ENCODE measurements at regions of chr10 and their contacts with region 1.

Region 1: DNA sequence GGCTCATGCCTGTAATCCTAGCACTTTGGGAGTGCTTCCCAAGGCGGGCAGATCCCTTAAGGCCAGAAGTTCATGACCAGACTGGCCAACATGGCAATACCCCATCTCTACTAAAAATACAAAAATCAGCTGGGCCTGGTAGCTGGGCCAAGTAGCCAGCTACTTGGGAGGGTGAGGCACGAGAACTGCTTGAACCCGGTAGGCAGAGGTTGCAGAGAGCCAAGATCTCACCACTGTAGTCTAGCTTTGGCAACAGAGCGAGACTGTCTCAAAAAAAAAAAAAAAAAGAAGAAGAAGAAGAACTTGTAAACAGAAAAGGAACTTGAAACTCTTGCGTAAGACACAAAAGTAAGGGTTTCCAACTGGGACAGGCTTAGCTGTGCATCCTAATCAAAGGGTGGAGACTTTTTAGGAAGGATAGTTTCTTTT is 5.6 kb upstream of the IFIT2 start:
- DNase-seq: no peak
- ATAC-seq: no peak
- H3K4me3 ChIP-seq: no peak overlapping the region
- H3K27ac ChIP-seq: no peak overlapping the region
- H3K4me1 ChIP-seq: no peaks in the 10 kb centered on the region
- H3K27me3 ChIP-seq: no peaks in the 10 kb centered on the region
- CTCF ChIP-seq: no peak
- EP300 ChIP-seq: no peak
- POLR2A ChIP-seq: no peak
- RAD21 ChIP-seq: no peak

Region 2: GRCh38 chr10:89251409-89252224 is 44.6 kb before region 1 on chr10 and contains the start of gene LIPA:
- CTCF ChIA-PET with region 1: no interaction called
- POLR2A ChIA-PET with region 1: no interaction called
- in situ Hi-C with region 1: no loop called
- intact Hi-C with region 1: no loop called
- DNase-seq: peak in 1 of 4 experiments; percentile 1
- ATAC-seq: no peak
- H3K4me3 ChIP-seq: no peak within 1 kb of the TSS
- H3K27ac ChIP-seq: no peak within 1 kb of the TSS
- H3K4me1 ChIP-seq: peaks cover 0 to 6% of the 10 kb centered on the region in 2 experiments; a peak in 2 of 5 replicates
- H3K27me3 ChIP-seq: no peaks in the 10 kb centered on the region
- CTCF ChIP-seq: no peak
- EP300 ChIP-seq: no peak
- POLR2A ChIP-seq: no peak
- RAD21 ChIP-seq: no peak
- polyA plus RNA-seq, gene LIPA: 0.13 to 0.20 TPM

Region 3: GRCh38 chr10:89389254-89389653 is 93.0 kb after region 1 on chr10:
- CTCF ChIA-PET with region 1: no interaction called
- POLR2A ChIA-PET with region 1: no interaction called
- in situ Hi-C with region 1: no loop called
- intact Hi-C with region 1: loop called (anchors 1 kb)
- DNase-seq: peak in 1 of 4 experiments; percentile 29
- ATAC-seq: peak; percentile 59; the same call in 2 of the 3 replicates
- H3K4me3 ChIP-seq: no peak overlapping the region
- H3K27ac ChIP-seq: no peak overlapping the region
- H3K4me1 ChIP-seq: peaks cover 0 to 8% of the 10 kb centered on the region in 2 experiments; a peak in 3 of 5 replicates
- H3K27me3 ChIP-seq: no peaks in the 10 kb centered on the region
- CTCF ChIP-seq: peak in 2 of 3 experiments; percentile 30 to 58; a peak in 2 of 6 replicates
- EP300 ChIP-seq: no peak
- POLR2A ChIP-seq: no peak
- RAD21 ChIP-seq: peak; percentile 68 to 82

Region 4: GRCh38 chr10:89563861-89564478 is 267.7 kb after region 1 on chr10:
- CTCF ChIA-PET with region 1: no interaction called
- POLR2A ChIA-PET with region 1: no interaction called
- in situ Hi-C with region 1: no loop called
- intact Hi-C with region 1: loop called (anchors 10 kb)
- DNase-seq: peak; percentile 20 to 34 (median 22)
- ATAC-seq: peak; percentile 78
- H3K4me3 ChIP-seq: no peak overlapping the region
- H3K27ac ChIP-seq: no peak overlapping the region
- H3K4me1 ChIP-seq: no peaks in the 10 kb centered on the region
- H3K27me3 ChIP-seq: peaks cover 0 to 4% of the 10 kb centered on the region in 2 experiments; a peak in 1 of 5 replicates
- CTCF ChIP-seq: peak; percentile 33 to 70 (median 43); a peak in 3 of 6 replicates
- EP300 ChIP-seq: no peak
- POLR2A ChIP-seq: no peak
- RAD21 ChIP-seq: peak; percentile 71 to 74

Measured in K562 (cell line).